HAP-1 (cell line): ENCODE measurements at regions of chr17 and their contacts with region 1.

Region 1: DNA sequence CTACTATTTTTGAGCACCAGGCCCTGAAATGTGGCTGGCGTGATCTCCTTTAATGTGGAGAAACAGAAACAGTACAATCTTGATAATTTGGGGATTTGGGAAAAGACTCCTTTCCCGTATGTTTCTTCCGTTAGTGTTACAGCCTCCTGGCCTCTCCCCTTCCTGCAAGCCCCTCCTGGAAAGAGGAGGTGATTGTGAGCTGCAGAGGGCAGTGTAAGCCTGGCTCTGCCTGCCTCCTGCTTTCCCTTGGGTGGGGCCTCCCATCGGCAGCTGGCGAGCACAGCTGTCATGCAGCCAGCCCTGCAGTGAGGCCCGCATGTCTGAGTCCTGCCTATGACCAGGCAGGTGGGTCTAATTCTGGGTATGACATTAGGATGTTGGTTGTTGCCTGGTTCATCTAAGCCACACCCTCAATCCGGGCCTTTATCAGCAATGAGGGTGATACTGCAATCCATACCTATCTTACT is 48.7 kb upstream of the WSB1 start:
- DNase-seq: peak; percentile 65 to 81
- H3K4me3 ChIP-seq: no peak overlapping the region
- H3K4me1 ChIP-seq: peaks cover 3% of the 10 kb centered on the region; the same call in 1 of the 2 replicates
- H3K27me3 ChIP-seq: no peaks in the 10 kb centered on the region

Region 2: GRCh38 chr17:27345141-27345904 is 100.1 kb after region 1 on chr17:
- in situ Hi-C with region 1: loop called (anchors 10 kb)
- DNase-seq: peak; percentile 86 to 92
- H3K4me3 ChIP-seq: peak overlapping the region; percentile 37
- H3K4me1 ChIP-seq: peaks cover 22% of the 10 kb centered on the region
- H3K27me3 ChIP-seq: no peaks in the 10 kb centered on the region

Region 3: GRCh38 chr17:27455914-27456680 is 210.8 kb after region 1 on chr17 and contains the start of gene KSR1:
- in situ Hi-C with region 1: loop called (anchors 25 kb)
- DNase-seq: peak; percentile 73 to 90
- H3K4me3 ChIP-seq: peak within 1 kb of the TSS; percentile 60
- H3K4me1 ChIP-seq: peaks cover 12% of the 10 kb centered on the region
- H3K27me3 ChIP-seq: no peaks in the 10 kb centered on the region

Region 4: DNA sequence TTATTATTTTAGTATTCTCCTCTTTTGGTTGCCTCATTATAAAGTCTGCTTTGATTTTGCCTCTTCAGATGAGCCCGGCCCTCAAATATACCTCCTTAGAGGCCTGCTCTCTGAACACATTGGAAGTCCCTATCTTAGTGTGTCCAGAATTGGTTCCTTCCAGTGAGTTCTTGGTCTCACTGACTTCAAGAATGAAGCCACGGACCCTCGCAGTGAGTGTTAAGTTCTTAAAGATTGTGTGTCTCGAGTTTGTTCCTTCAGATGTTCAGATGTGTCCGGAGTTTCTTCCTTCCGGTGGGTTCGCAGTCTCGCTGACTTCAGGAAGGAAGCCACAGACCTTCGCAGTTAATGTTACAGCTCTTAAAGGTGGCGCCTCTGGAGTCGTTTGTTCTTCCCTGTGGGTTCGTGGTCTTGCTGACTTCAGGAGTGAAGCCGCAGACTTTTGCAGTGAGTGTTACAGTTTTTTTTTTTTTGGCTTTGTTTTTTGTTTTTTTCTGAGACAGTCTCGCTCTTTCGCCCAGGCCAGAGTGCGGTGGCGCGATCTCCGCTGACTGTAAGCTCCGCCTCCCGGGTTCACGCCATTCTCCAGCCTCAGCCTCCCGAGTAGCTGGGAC is 600.9 kb after region 1 on chr17:
- in situ Hi-C with region 1: loop called (anchors 25 kb)
- DNase-seq: no peak
- H3K4me3 ChIP-seq: no peak overlapping the region
- H3K4me1 ChIP-seq: no peaks in the 10 kb centered on the region
- H3K27me3 ChIP-seq: no peaks in the 10 kb centered on the region; the same call in 1 of the 2 replicates

Region 5: GRCh38 chr17:27879987-27880608 is 634.8 kb after region 1 on chr17:
- in situ Hi-C with region 1: no loop called
- DNase-seq: peak; percentile 56 to 82
- H3K4me3 ChIP-seq: no peak overlapping the region
- H3K4me1 ChIP-seq: no peaks in the 10 kb centered on the region
- H3K27me3 ChIP-seq: no peaks in the 10 kb centered on the region